ENCODE measurements at regions of chr1 and their contacts with region 1.

Region 1: GRCh38 chr1:195637539-195637938 is 970.7 kb downstream of the KCNT2 start:
- DNase-seq: no peak
- H3K4me3 ChIP-seq: no peak overlapping the region
- H3K27me3 ChIP-seq: no peaks in the 10 kb centered on the region
- CTCF ChIP-seq: no peak

Region 2: DNA sequence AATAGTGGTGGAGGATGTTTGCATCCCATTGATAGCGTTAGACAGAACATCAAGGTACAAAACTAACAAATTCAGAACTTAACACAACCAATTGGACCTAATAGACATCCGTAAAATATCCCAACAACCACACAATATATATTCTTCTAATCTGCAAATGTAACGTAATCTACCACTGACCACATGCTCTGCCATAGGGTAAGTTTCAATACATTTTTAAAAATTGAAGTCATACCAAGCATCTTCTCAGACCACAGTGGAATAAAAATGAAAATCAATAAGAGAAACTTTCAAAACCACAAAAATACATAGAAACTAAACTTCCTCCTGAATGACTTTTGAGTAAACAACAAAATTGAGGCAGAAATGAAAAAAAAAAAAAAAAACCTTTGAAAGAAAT is 116.8 kb before region 1 on chr1:
- CTCF ChIA-PET with region 1: no interaction called
- POLR2A ChIA-PET with region 1: no interaction called
- DNase-seq: no peak
- H3K4me3 ChIP-seq: no peak overlapping the region
- H3K27me3 ChIP-seq: no peaks in the 10 kb centered on the region
- CTCF ChIP-seq: no peak

Region 3: GRCh38 chr1:195738966-195739655 is 101.6 kb after region 1 on chr1:
- CTCF ChIA-PET with region 1: no interaction called
- POLR2A ChIA-PET with region 1: no interaction called
- DNase-seq: peak; percentile 34
- H3K4me3 ChIP-seq: no peak overlapping the region
- H3K27me3 ChIP-seq: no peaks in the 10 kb centered on the region
- CTCF ChIP-seq: no peak

Region 4: GRCh38 chr1:196355206-196355786 is 717.8 kb after region 1 on chr1:
- CTCF ChIA-PET with region 1: no interaction called
- POLR2A ChIA-PET with region 1: interaction called, 14 read pairs
- DNase-seq: no peak
- H3K4me3 ChIP-seq: no peak overlapping the region
- H3K27me3 ChIP-seq: no peaks in the 10 kb centered on the region
- CTCF ChIP-seq: peak; percentile 59